Sigmoid colon (tissue), 7 donors: ENCODE measurements at regions of chr14 and their contacts with region 1.

Region 1: GRCh38 chr14:59189786-59190771 is 1.6 kb downstream of the DAAM1 start:
- DNase-seq: peak; percentile 95
- H3K4me3 ChIP-seq: peak overlapping the region; percentile 69 to 95 (median 85)
- H3K27ac ChIP-seq: peak overlapping the region; percentile 95 to 99 (median 98)
- H3K4me1 ChIP-seq: peaks cover 0 to 50% (median 47%) of the 10 kb centered on the region in 4 donors
- H3K27me3 ChIP-seq: no peaks in the 10 kb centered on the region
- CTCF ChIP-seq: no peak
- EP300 ChIP-seq: no peak
- POLR2A ChIP-seq: no peak

Region 2: DNA sequence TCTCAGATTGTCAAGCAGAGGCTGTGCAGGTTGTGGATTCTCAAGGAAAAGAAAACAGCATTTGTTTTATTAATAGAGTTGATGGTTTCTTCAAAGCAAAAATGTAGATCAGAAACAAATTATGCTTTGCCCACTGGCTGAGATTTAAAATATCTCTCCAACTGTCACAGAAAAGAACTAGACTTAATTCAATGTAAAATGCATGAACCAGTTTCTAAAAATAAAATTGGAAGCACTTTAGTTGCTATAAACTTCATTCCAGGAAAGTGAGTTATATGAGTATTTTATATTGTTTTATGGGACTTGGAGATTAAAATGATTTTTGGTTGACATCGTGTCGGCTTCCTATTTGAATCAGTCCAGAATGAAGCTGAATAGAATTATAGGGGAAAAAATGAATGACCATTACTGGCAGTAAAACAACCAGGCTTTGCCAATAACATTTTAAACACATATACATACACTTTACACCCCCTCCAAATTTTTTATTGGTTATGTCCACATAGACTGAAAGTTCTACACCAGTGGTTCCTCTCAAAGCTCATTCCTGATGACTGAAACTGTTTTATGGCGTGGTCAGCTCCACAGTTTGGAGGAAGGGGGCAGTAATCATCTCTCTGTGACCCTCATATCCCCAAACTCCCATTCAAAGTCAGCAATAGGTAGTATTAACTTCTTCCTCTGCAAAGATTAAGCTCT is 57.1 kb before region 1 on chr14:
- intact Hi-C with region 1: loop called (anchors 5 kb)
- DNase-seq: no peak
- H3K4me3 ChIP-seq: no peak overlapping the region
- H3K27ac ChIP-seq: peak overlapping the region in 2 of 4 donors; percentile 42 to 60
- H3K4me1 ChIP-seq: peaks cover 0 to 42% (median 24%) of the 10 kb centered on the region in 4 donors
- H3K27me3 ChIP-seq: no peaks in the 10 kb centered on the region
- CTCF ChIP-seq: peak in 1 of 4 experiments; percentile 12
- EP300 ChIP-seq: no peak
- POLR2A ChIP-seq: no peak

Region 3: GRCh38 chr14:59175404-59175803 is 14.7 kb before region 1 on chr14:
- intact Hi-C with region 1: no loop called
- DNase-seq: no peak
- H3K4me3 ChIP-seq: no peak overlapping the region
- H3K27ac ChIP-seq: no peak overlapping the region
- H3K4me1 ChIP-seq: peaks cover 0 to 14% (median 5%) of the 10 kb centered on the region in 4 donors
- H3K27me3 ChIP-seq: no peaks in the 10 kb centered on the region
- CTCF ChIP-seq: no peak
- EP300 ChIP-seq: no peak
- POLR2A ChIP-seq: no peak

Region 4: DNA sequence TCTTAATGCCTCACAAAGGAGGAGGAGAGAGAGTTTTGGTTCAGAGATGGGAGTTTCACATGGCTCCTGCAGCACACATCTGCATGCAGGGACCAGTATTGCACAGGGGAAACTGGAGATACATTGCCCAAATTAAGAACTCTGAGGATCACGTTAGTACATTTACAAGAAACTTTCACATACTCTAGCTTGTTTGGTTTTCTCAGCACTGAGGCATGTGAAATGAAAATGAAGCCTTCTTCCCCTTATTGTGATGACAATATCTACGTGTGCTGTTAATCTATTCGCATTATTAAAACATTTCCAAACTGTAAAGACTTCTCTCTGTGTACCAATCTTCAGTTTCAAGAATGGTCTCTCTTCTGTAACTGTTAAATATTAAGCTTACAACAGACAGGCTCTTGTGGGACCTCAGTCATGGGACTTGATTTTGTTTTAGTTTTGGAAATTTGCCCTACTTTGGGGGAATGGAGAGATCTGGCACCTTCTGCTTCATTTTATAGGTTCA is 123.1 kb after region 1 on chr14:
- intact Hi-C with region 1: loop called (anchors 5 kb)
- DNase-seq: no peak
- H3K4me3 ChIP-seq: no peak overlapping the region
- H3K27ac ChIP-seq: peak overlapping the region; percentile 56 to 79 (median 69)
- H3K4me1 ChIP-seq: peaks cover 0 to 100% (median 87%) of the 10 kb centered on the region in 4 donors
- H3K27me3 ChIP-seq: no peaks in the 10 kb centered on the region
- CTCF ChIP-seq: no peak
- EP300 ChIP-seq: no peak
- POLR2A ChIP-seq: no peak

Region 5: GRCh38 chr14:59346796-59347510 is 156.9 kb after region 1 on chr14:
- intact Hi-C with region 1: loop called (anchors 5 kb)
- DNase-seq: no peak
- H3K4me3 ChIP-seq: no peak overlapping the region
- H3K27ac ChIP-seq: peak overlapping the region; percentile 72 to 89 (median 83)
- H3K4me1 ChIP-seq: peaks cover 0 to 84% (median 76%) of the 10 kb centered on the region in 4 donors
- H3K27me3 ChIP-seq: no peaks in the 10 kb centered on the region
- CTCF ChIP-seq: no peak
- EP300 ChIP-seq: no peak
- POLR2A ChIP-seq: no peak

Region 6: DNA sequence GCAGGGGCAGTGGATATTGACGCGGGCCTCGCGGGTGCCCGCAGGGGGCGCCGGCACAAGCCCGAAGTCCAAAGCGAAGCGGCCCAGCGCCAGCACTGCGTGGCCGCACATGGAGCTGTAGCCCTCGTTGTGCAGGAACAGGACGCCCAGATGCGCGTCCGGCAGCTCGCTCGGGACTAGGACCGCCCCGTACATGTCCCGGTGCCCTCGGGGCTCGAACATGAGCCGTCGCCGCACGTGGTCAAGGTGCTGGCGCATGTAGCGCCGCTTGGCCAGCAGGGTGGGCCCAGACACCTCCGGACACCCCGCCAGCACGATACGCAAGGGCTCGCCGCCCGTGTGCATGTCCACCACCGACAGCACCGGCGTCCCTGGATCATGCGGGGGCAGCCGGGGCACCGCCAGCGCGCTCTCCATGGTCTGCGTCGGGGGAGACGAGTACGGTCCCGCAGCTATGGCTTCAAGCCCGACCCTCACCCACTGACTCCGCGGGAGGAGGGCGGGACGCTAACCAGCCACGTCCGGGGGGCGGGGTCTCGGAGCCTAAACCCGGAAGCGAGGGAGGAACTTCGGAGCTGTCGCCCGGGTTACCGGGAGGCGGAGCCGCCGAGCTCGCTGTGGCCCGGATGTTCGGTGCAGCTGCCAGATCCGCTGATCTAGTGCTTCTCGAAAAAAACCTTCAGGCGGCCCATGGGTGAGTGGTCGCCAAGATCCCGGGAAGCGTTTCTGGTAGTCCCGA is 294.0 kb after region 1 on chr14 and contains the starts of genes JKAMP and L3HYPDH:
- intact Hi-C with region 1: loop called (anchors 2 kb)
- DNase-seq: peak; percentile 98
- H3K4me3 ChIP-seq: peak within 1 kb of the TSS; percentile 71 to 94 (median 79)
- H3K27ac ChIP-seq: peak within 1 kb of the TSS; percentile 90 to 95 (median 94)
- H3K4me1 ChIP-seq: peaks cover 0 to 70% (median 53%) of the 10 kb centered on the region in 4 donors
- H3K27me3 ChIP-seq: no peaks in the 10 kb centered on the region
- CTCF ChIP-seq: peak; percentile 38 to 68 (median 52)
- EP300 ChIP-seq: peak in 1 of 4 donors; percentile 37
- POLR2A ChIP-seq: peak; percentile 71 to 74
- total RNA-seq, gene JKAMP: 26.6 to 49.0 (median 37.5) TPM
- total RNA-seq, gene L3HYPDH: 23.9 to 46.0 (median 30.4) TPM